Heart right ventricle (tissue), 16 donors: ENCODE measurements at regions of chr3 and their contacts with region 1.

Region 1: DNA sequence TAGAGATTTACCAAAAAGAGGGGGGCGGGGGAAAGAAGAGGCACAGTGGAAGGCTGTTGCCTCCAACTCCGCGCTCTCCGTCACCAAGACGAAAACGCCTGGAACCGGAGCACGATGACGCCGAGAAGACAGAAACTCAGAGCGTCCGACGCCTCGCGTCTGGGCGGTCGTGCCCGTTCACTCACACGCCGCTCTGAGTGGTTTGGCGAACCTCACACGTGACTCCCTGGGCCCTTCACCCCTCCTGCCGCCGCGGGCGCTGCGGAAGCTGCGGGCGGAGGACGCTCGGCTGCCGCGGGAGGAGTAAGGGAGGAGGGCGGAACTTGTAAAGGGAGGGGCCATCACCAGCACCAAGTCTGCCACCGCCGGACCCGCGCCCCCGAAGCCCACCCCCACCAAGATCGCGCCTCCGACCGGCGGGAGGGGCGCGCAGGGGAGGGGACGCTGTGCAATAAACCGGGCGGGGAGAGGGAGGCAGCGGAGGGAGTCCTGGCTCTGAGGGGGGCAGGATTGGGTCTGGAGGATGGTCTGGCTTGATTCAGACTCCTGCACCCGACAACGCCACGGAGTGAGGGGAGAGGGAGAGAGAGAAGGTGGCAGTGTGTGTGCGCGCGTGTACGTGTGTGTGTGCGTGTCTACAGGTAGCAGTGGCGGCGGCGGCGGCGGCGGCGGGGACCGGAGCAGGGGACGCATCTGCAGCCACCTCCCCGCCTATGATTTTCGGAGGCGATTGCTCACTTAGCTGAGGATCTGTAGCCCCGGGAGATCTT is 1.9 kb upstream of the NLGN1 start:
- DNase-seq: peak; percentile 86
- ATAC-seq: peak; percentile 92 to 96 (median 95)
- H3K4me3 ChIP-seq: peak overlapping the region; percentile 23 to 81 (median 68)
- H3K27ac ChIP-seq: peak overlapping the region; percentile 11 to 90 (median 84)
- H3K4me1 ChIP-seq: peaks cover 0 to 37% (median 8%) of the 10 kb centered on the region in 9 donors
- H3K27me3 ChIP-seq: peaks cover 0 to 51% (median 4%) of the 10 kb centered on the region in 7 donors
- CTCF ChIP-seq: peak in 2 of 9 donors; percentile 7 to 19

Region 2: DNA sequence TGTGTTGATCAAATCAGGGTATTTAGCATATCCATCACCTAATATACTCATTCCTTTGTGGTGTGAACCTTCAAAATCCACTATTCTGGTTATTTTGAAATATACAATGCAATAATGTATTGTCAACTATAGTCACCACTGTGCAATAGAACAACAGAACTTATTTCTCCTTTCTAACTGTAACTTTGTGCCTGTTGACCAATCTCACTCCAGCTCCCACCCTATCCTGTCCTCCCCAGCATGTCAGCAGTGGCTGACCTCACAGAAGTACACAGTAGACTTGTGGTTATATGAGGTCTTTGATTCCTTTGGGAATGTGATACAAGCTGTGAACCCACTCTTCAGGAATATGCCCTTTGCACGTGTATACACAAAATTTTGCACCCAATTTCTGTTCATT is 580.9 kb before region 1 on chr3:
- intact Hi-C with region 1: loop called in 3 of 10 experiments (anchors 10 kb)
- DNase-seq: no peak
- ATAC-seq: peak in 3 of 8 donors; percentile 10 to 41 (median 22)
- H3K4me3 ChIP-seq: no peak overlapping the region
- H3K27ac ChIP-seq: peak overlapping the region in 3 of 10 donors; percentile 58 to 76 (median 69)
- H3K4me1 ChIP-seq: peaks cover 0 to 13% (median 0%) of the 10 kb centered on the region in 9 donors
- H3K27me3 ChIP-seq: no peaks in the 10 kb centered on the region
- CTCF ChIP-seq: no peak

Region 3: GRCh38 chr3:172991424-172991996 is 404.1 kb before region 1 on chr3:
- intact Hi-C with region 1: loop called in 1 of 10 experiments (anchors 10 kb)
- DNase-seq: no peak
- ATAC-seq: no peak
- H3K4me3 ChIP-seq: no peak overlapping the region
- H3K27ac ChIP-seq: no peak overlapping the region
- H3K4me1 ChIP-seq: peaks cover 0 to 4% (median 0%) of the 10 kb centered on the region in 9 donors
- H3K27me3 ChIP-seq: no peaks in the 10 kb centered on the region
- CTCF ChIP-seq: no peak

Region 4: DNA sequence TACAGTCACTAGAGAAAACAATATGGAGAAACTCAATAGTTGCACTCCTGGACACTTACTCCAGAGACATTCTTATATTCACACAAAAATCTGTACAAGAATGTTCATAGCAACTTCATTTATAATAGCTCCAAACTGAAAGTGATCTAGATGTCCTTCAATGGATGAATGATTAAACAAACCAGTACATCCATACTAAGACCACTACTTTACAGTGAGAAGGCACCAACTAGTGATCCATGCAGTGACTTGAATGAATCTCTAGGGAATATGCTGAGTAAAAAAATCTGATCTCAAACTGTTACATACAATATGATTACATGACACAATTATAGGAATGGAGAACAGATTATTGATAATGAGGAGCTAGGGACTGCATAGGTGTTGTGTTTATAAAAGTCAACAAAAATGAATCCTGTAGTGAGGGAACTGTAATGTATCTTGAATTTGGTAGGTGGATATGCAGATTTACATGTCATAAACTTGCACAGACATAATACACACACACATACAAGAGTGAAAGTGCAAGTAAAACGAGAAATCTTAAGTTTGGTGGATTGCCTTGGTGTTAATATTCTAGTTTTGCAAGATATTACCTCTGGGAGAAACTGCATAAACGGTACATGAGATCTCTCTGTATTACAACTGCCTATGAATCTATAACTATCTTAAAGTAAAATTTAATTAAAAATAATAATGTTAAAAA is 340.2 kb before region 1 on chr3:
- intact Hi-C with region 1: no loop called
- DNase-seq: no peak
- ATAC-seq: no peak
- H3K4me3 ChIP-seq: no peak overlapping the region
- H3K27ac ChIP-seq: no peak overlapping the region
- H3K4me1 ChIP-seq: no peaks in the 10 kb centered on the region
- H3K27me3 ChIP-seq: no peaks in the 10 kb centered on the region
- CTCF ChIP-seq: no peak

Region 5: GRCh38 chr3:173199568-173199967 is 196.0 kb before region 1 on chr3:
- intact Hi-C with region 1: no loop called
- DNase-seq: no peak
- ATAC-seq: no peak
- H3K4me3 ChIP-seq: no peak overlapping the region
- H3K27ac ChIP-seq: no peak overlapping the region
- H3K4me1 ChIP-seq: no peaks in the 10 kb centered on the region
- H3K27me3 ChIP-seq: no peaks in the 10 kb centered on the region
- CTCF ChIP-seq: no peak

Region 6: DNA sequence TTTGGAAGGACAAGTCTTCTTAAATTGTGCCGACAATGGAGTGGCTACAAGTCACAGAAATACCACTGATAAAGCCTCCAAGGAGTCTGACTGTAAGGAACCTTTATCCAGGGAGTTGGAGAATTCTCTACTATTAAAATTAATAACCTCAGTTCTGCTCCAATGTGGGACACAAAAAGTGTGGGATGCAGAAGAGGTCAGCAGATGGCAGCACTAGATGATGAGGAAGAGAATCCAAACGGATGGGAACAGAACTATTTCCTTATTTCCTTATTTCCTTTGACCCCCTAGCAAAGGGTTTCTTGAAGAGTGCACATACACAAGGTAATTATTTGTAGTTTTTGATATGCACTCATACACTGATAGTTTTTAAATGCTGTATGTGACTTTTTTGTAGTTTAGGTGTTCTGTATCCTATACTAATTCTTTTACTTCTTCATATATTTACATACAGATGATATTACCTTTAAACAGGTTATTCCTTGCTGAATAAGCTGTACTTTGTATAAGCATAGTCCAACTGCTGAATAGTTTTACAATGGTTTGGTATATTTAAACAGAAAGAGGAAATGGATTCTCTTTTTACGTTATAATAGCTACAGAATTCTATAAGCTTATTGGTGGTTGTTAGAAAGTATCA is 23.6 kb before region 1 on chr3:
- intact Hi-C with region 1: loop called in 1 of 10 experiments (anchors 1 kb)
- DNase-seq: peak in 1 of 2 donors; percentile 21
- ATAC-seq: no peak
- H3K4me3 ChIP-seq: no peak overlapping the region
- H3K27ac ChIP-seq: no peak overlapping the region
- H3K4me1 ChIP-seq: no peaks in the 10 kb centered on the region
- H3K27me3 ChIP-seq: no peaks in the 10 kb centered on the region
- CTCF ChIP-seq: peak; percentile 16 to 75 (median 64)

Region 7: GRCh38 chr3:173614522-173614921 is 218.9 kb after region 1 on chr3:
- intact Hi-C with region 1: no loop called
- DNase-seq: no peak
- ATAC-seq: no peak
- H3K4me3 ChIP-seq: no peak overlapping the region
- H3K27ac ChIP-seq: no peak overlapping the region
- H3K4me1 ChIP-seq: peaks cover 0 to 13% (median 0%) of the 10 kb centered on the region in 9 donors
- H3K27me3 ChIP-seq: no peaks in the 10 kb centered on the region
- CTCF ChIP-seq: no peak

Region 8: DNA sequence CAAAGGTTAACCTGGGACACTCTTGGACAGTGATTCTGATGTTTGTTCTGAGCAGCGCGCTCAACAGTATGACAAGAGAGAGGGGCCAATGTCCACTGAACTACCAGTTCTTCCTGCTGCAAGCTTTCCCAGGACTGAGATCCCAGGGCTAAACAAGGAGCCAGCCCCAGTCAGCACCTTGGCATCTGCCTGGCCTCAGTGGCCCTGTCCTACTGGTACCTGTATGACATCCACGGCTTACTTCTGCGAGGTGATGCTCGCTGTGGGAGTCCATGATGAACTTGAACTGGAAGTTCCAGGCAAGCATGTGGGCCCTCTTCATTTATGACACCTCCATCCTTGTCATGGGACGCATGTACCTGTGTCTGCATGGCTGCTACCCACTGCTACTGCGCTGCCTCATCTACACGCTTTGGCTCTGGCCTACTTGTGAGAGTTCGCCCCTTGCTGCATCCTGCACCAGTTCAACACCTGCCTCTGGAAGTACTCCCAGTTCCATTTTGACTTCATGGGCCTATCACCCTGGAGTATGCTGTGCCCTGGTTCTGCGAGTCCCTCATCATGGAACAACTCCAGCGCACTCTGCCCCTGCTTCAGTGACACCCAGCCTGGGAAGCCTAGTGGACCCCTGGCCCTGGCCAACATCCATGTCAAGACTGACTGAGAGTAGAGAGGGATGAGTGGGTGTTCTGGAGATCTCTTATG is 248.6 kb after region 1 on chr3:
- intact Hi-C with region 1: no loop called
- DNase-seq: no peak
- ATAC-seq: peak in 2 of 8 donors; percentile 14 to 50
- H3K4me3 ChIP-seq: no peak overlapping the region
- H3K27ac ChIP-seq: no peak overlapping the region
- H3K4me1 ChIP-seq: no peaks in the 10 kb centered on the region
- H3K27me3 ChIP-seq: no peaks in the 10 kb centered on the region
- CTCF ChIP-seq: no peak